Common myeloid progenitor, CD34-positive (primary cell): ENCODE measurements at regions of chr19 and their contacts with region 1.

Region 1: DNA sequence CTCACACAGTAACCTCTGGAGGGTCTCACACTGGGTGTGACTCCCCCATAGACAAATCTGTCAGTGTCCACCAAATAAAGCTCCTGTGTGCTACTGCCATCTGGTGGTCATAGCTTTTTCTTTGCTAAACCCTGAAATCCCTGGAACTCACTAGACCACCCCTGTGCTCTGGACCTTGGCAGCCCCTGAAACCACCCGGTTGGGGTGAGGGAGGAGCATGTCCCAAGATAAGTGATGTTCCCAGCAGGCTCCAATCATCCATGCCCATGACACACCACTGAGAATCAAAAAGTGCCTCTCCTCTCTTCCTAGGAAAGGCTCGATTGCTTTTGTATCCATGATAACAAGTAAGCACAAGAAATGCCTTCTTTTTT is 6.5 kb upstream of the HSD17B14 start:
- DNase-seq: peak; percentile 57 to 78 (median 69)
- H3K4me3 ChIP-seq: no peak overlapping the region
- H3K27ac ChIP-seq: no peak overlapping the region
- H3K4me1 ChIP-seq: peaks cover 0 to under 1% (median 0%) of the 10 kb centered on the region in 4 experiments
- H3K27me3 ChIP-seq: no peaks in the 10 kb centered on the region

Region 2: DNA sequence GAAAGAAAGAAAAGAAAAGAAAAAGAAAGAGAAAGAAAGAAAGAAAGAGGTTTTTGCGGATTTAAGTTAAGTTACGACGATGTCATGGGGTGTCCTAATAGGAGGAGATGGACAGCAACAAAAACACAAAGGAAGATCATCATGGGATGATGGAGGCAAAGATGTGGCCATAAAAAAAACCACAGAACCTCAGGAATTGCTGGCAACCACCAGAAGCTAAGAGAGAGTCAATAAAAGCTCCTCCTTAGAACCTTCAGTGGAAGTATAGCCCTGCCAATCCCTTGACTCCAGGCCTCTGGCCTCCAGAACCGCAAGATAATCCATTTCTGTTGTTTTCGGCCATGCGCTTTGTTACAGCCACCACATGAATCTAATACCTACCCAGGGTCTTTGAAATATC is 14.1 kb after region 1 on chr19:
- CTCF ChIA-PET with region 1: interaction called, 55 read pairs
- POLR2A ChIA-PET with region 1: no interaction called
- DNase-seq: no peak
- H3K4me3 ChIP-seq: no peak overlapping the region
- H3K27ac ChIP-seq: no peak overlapping the region
- H3K4me1 ChIP-seq: peaks cover 0 to 13% (median 7%) of the 10 kb centered on the region in 4 experiments
- H3K27me3 ChIP-seq: no peaks in the 10 kb centered on the region

Region 3: GRCh38 chr19:48959917-48960239 is 117.1 kb after region 1 on chr19:
- CTCF ChIA-PET with region 1: no interaction called
- POLR2A ChIA-PET with region 1: no interaction called
- DNase-seq: peak in 2 of 3 donors; percentile 41 to 56
- H3K4me3 ChIP-seq: no peak overlapping the region
- H3K27ac ChIP-seq: no peak overlapping the region
- H3K4me1 ChIP-seq: peaks cover 7 to 51% (median 49%) of the 10 kb centered on the region in 4 experiments
- H3K27me3 ChIP-seq: no peaks in the 10 kb centered on the region